Prostate gland (tissue), 2 donors: ENCODE measurements at regions of chr1 and their contacts with region 1.

Region 1: GRCh38 chr1:41101950-41102607 is 80.6 kb upstream of the SLFNL1 start:
- DNase-seq: peak; percentile 91
- H3K4me3 ChIP-seq: no peak overlapping the region
- H3K27ac ChIP-seq: peak overlapping the region; percentile 16 to 26
- H3K4me1 ChIP-seq: peaks cover 6% of the 10 kb centered on the region
- H3K27me3 ChIP-seq: no peaks in the 10 kb centered on the region
- CTCF ChIP-seq: no peak
- POLR2A ChIP-seq: no peak

Region 2: GRCh38 chr1:41056907-41057306 is 45.2 kb before region 1 on chr1:
- intact Hi-C with region 1: no loop called
- DNase-seq: no peak
- H3K4me3 ChIP-seq: no peak overlapping the region
- H3K27ac ChIP-seq: no peak overlapping the region
- H3K4me1 ChIP-seq: no peaks in the 10 kb centered on the region
- H3K27me3 ChIP-seq: no peaks in the 10 kb centered on the region
- CTCF ChIP-seq: no peak
- POLR2A ChIP-seq: no peak

Region 3: DNA sequence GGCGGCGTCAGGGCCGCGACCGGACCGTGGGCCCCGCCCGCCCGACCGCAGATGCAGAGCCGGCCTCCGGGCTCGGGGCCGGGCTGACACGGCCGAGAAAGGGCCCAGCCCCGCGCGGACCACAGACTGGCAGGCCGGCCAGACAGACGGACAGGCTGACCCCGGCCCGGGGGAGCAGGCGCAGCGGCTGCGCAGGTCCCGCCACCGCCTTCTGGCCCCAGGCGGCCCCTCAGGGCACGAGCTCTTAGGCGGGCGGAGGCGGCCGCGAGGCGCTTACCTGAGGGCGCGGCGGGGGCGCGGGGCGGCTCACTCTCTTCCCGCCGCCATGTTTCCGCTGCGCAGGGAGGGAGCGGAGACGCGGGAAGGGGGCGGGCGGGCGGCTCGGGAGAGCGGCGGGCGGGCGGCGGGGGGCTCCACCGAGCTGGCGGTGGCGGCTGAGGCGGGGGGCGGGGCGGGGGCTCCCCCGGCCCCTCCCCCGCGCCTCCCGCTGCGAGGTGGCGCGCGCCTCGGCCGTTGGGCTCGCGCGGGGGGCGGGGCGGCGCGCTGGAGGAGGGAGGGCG is 139.8 kb after region 1 on chr1 and contains the start of gene SCMH1:
- intact Hi-C with region 1: loop called (anchors 5 kb)
- DNase-seq: peak; percentile 27
- H3K4me3 ChIP-seq: peak within 1 kb of the TSS; percentile 86 to 95
- H3K27ac ChIP-seq: peak within 1 kb of the TSS; percentile 96 to 97
- H3K4me1 ChIP-seq: peaks cover 11% of the 10 kb centered on the region
- H3K27me3 ChIP-seq: no peaks in the 10 kb centered on the region
- CTCF ChIP-seq: no peak
- POLR2A ChIP-seq: peak; percentile 5
- total RNA-seq, gene SCMH1: 49.0 to 62.7 TPM